ENCODE measurements at regions of chr2 and their contacts with region 1.

Region 1: DNA sequence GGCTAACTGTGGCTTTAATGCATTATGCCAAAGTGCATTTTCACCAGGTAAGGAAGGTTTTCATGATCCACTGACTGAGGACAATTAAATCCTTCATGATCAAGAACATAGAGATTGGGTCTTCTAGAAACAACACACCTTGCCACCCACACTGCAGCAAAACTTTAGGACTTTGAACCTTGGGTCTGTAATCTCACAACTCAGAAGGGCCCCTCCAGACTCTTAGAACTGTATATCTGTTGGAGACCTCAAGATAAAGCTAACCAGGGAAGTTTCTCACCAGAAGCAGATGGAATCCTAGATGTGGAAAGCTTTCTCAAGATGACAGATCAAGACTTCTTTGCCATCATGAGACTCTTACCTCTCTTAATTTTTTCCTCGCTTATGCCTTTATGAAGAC is 42.5 kb upstream of the MAT2A start:
- DNase-seq: no peak
- H3K4me3 ChIP-seq: no peak overlapping the region
- H3K27ac ChIP-seq: no peak overlapping the region
- H3K4me1 ChIP-seq: peaks cover 22% of the 10 kb centered on the region
- H3K27me3 ChIP-seq: no peaks in the 10 kb centered on the region
- CTCF ChIP-seq: no peak

Region 2: GRCh38 chr2:85457877-85458316 is 38.5 kb before region 1 on chr2:
- CTCF ChIA-PET with region 1: interaction called, 6 read pairs
- POLR2A ChIA-PET with region 1: interaction called, 3 read pairs
- intact Hi-C with region 1: loop called (anchors 5 kb)
- DNase-seq: peak; percentile 59 to 89
- H3K4me3 ChIP-seq: no peak overlapping the region
- H3K27ac ChIP-seq: peak overlapping the region; percentile 45
- H3K4me1 ChIP-seq: peaks cover 48% of the 10 kb centered on the region
- H3K27me3 ChIP-seq: no peaks in the 10 kb centered on the region
- CTCF ChIP-seq: no peak